Right lobe of liver (tissue), 6 donors: ENCODE measurements at regions of chr15 and their contacts with region 1.

Region 1: GRCh38 chr15:101008158-101009139 is 89.3 kb downstream of the LRRK1 start:
- DNase-seq: peak; percentile 84 to 87 (median 85)
- ATAC-seq: peak; percentile 94 to 97 (median 94)
- H3K4me3 ChIP-seq: peak overlapping the region in 2 of 3 donors; percentile 48 to 55
- H3K27ac ChIP-seq: no peak overlapping the region
- H3K4me1 ChIP-seq: peaks cover 0 to 10% (median 5%) of the 10 kb centered on the region in 4 donors
- H3K27me3 ChIP-seq: no peaks in the 10 kb centered on the region
- CTCF ChIP-seq: peak; percentile 90 to 98 (median 98)
- POLR2A ChIP-seq: no peak

Region 2: DNA sequence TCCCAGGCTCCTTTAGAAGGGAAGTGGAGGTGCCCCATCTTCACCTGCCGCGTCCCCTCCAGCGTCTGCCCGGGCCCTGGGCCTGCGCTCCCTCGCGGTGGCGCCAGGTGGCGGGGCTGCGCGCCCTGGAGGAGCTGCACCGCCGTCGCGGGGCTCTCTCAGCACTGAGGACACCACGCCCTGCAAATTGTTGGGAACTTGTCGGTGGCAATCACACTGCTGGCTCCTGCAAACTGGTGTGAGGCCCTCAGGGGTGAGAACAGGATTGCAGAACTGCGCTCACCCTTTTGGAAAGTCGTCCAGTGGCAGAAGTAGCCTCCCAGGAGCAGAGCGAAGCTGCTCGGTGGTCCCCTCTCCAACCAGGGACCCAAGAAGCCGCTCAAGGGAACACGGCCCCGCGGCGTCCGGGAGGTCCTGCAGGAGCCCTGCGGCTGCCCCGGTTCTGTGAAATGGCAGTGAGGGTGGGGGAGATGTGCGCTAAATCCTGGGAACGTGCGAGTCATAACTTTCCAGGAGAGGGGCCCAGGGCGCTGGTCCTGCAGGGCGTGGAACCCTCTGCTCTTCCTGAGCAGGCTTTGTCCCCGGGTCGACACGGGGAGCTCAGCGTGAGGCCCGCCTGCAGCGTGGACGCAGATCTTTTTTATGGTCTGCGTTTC is 90.3 kb before region 1 on chr15:
- intact Hi-C with region 1: loop called (anchors 5 to 10 kb)
- DNase-seq: peak; percentile 73 to 82 (median 81)
- ATAC-seq: peak; percentile 91 to 94 (median 94)
- H3K4me3 ChIP-seq: peak overlapping the region; percentile 46 to 53 (median 52)
- H3K27ac ChIP-seq: peak overlapping the region in 1 of 3 donors; percentile 1
- H3K4me1 ChIP-seq: no peaks in the 10 kb centered on the region
- H3K27me3 ChIP-seq: no peaks in the 10 kb centered on the region
- CTCF ChIP-seq: peak; percentile 82 to 91 (median 86)
- POLR2A ChIP-seq: no peak

Region 3: GRCh38 chr15:101070502-101071273 is 62.2 kb after region 1 on chr15:
- intact Hi-C with region 1: no loop called
- DNase-seq: no peak
- ATAC-seq: peak; percentile 50 to 84 (median 58)
- H3K4me3 ChIP-seq: no peak overlapping the region
- H3K27ac ChIP-seq: peak overlapping the region in 2 of 3 donors; percentile 37 to 81
- H3K4me1 ChIP-seq: peaks cover 0 to 10% (median 4%) of the 10 kb centered on the region in 4 donors
- H3K27me3 ChIP-seq: no peaks in the 10 kb centered on the region
- CTCF ChIP-seq: no peak
- POLR2A ChIP-seq: no peak

Region 4: DNA sequence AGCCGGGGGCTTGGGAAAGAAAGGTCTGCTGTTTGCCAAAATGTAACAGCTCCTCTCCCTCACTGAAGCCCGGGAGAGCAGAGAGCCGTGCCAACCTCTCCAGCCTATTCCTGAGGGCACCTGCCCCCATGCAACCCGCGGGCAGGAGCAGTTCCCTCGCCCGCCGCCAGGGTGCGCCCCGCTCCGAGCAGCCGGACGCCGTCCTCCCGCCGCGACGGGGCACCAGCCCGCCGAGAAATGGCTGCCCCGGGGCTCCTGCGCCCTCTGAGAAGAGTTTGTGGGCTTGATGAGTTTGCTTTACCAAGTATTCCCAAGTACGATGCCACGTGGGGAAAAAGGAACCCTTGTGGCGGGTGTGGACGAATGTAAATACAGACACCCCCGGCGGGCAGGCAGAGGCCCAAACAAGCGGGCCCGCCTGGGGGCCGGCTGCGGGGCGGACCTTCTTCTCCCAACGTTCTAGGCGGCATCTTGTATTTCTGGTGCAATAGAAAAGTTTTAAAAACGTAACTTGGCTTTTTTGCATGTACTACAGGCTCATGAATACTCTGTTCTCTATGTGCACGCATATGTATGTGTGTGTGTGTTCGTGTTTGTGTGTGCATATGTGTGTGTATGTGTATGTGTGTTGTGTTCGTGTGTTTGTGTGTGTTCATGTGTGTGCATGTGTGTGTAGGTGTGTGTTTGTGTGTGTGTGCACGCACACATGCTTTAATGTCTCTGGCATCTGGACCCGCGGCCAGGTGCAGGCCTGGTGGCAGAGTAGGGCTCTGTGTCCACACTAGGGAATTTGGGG is 80.5 kb after region 1 on chr15:
- intact Hi-C with region 1: no loop called
- DNase-seq: peak; percentile 74 to 77 (median 76)
- ATAC-seq: peak; percentile 88 to 95 (median 88)
- H3K4me3 ChIP-seq: no peak overlapping the region
- H3K27ac ChIP-seq: no peak overlapping the region
- H3K4me1 ChIP-seq: no peaks in the 10 kb centered on the region
- H3K27me3 ChIP-seq: no peaks in the 10 kb centered on the region
- CTCF ChIP-seq: peak; percentile 94 to 99 (median 98)
- POLR2A ChIP-seq: no peak

Region 5: DNA sequence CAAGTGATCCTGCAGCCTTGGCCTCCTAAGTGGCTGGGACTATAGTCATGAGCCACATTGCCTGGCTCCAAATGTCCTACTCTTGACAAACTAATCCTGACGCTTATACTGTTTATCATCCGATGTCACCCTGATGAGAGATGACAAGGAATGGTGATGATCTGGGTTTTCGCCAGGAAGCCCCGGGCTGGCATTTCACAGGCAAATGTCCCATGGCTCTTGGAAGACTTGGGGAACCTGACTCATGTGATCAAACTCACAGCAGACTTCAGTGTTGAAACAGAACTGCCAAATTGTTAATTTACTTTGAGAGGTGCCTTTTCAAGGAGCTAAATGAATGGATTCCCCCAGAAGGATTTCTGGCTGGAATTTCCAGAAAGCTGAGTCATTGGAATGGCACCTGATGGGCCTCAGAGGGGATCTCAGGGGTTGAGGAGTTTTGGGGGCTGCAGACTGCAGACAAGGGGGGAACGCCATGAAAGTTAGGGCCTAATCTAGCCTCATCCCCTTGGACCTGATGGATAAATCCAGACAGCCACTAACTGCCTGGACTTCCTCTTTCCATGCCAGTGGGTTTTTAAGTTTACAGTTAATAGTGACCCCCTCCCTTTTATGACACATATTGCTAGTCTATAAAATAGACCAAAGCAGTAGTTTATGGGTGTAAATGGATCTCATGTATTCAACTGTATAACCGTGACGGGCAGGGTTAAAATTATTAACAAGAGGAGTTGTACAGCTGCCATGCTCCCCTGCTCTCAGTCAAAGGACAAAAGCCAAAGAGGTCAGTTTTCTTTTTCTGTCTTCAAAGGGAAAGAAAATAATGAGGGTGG is 96.8 kb after region 1 on chr15:
- intact Hi-C with region 1: no loop called
- DNase-seq: no peak
- ATAC-seq: no peak
- H3K4me3 ChIP-seq: no peak overlapping the region
- H3K27ac ChIP-seq: no peak overlapping the region
- H3K4me1 ChIP-seq: no peaks in the 10 kb centered on the region
- H3K27me3 ChIP-seq: no peaks in the 10 kb centered on the region
- CTCF ChIP-seq: no peak
- POLR2A ChIP-seq: no peak